ENCODE measurements at regions of chr1 and their contacts with region 1.

Region 1: DNA sequence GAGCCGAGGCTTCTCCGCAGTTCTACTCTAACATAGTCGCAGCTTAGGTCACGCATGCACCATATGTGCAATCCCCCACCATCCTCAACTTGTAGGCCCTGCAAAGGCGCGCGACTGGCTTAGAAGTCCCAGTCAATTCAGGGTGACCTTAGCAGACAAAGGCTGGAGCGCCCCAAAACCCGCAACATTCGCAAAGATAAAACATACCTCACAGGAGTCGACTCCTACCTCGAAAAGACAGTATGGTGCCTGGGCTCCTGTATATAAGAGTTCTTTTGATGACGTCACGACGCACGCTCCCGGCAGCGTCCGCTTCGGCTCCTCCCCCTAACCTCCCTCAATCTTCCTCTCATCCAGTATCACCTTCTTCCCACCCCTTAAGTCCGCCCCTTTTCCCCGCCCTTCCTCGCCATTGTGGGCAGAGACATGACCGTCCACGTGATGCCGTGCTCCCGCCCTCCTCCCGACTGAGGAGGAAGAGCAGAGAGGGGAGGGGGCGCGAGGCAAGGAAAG is at the start of gene GAS5:
- DNase-seq: peak; percentile 99
- ATAC-seq: peak; percentile 93 to 97
- H3K4me3 ChIP-seq: peak within 1 kb of the TSS; percentile 63 to 97 (median 85)
- H3K27ac ChIP-seq: peak within 1 kb of the TSS; percentile 90 to 96 (median 95)
- H3K4me1 ChIP-seq: peaks cover 27 to 30% of the 10 kb centered on the region in 2 donors
- H3K27me3 ChIP-seq: no peaks in the 10 kb centered on the region
- CTCF ChIP-seq: peak in 1 of 5 experiments; percentile 13
- POLR2A ChIP-seq: peak; percentile 93 to 97
- total RNA-seq, gene GAS5: 91.9 to 138 (median 98.4) TPM

Region 2: GRCh38 chr1:173420330-173420806 is 447.4 kb before region 1 on chr1:
- in situ Hi-C with region 1: no loop called
- intact Hi-C with region 1: loop called (anchors 5 kb)
- DNase-seq: peak in 1 of 2 donors; percentile 40
- ATAC-seq: peak; percentile 76 to 87
- H3K4me3 ChIP-seq: peak overlapping the region in 1 of 4 donors; percentile 8
- H3K27ac ChIP-seq: no peak overlapping the region
- H3K4me1 ChIP-seq: peaks cover 2 to 3% of the 10 kb centered on the region in 2 donors
- H3K27me3 ChIP-seq: no peaks in the 10 kb centered on the region
- CTCF ChIP-seq: peak; percentile 77 to 87 (median 82)
- POLR2A ChIP-seq: no peak

Region 3: DNA sequence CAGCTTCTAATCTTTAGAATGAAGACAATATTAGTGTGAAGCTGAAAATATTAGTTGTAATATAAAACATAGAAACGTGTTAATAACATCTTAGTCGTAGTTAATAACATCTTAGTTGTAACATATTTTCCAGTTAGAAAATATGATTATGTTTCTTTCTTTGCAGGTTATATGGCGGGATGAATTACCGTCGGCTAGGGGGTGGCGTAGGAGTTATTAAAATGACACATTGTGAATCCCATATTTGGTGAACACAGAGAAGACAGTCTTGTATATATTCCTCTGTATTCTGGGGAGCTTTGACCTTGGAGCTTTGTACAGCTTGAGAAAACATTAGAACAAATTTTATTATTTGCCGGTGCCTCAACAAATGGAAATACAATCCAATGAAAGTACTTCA is 82.8 kb before region 1 on chr1:
- in situ Hi-C with region 1: no loop called
- intact Hi-C with region 1: no loop called
- DNase-seq: no peak
- ATAC-seq: no peak
- H3K4me3 ChIP-seq: no peak overlapping the region
- H3K27ac ChIP-seq: no peak overlapping the region
- H3K4me1 ChIP-seq: no peaks in the 10 kb centered on the region
- H3K27me3 ChIP-seq: no peaks in the 10 kb centered on the region
- CTCF ChIP-seq: no peak
- POLR2A ChIP-seq: no peak

Region 4: GRCh38 chr1:174005032-174005431 is 137.2 kb after region 1 on chr1:
- in situ Hi-C with region 1: no loop called
- intact Hi-C with region 1: loop called (anchors 5 kb)
- DNase-seq: no peak
- ATAC-seq: peak; percentile 23 to 41
- H3K4me3 ChIP-seq: no peak overlapping the region
- H3K27ac ChIP-seq: peak overlapping the region in 3 of 4 donors; percentile 8 to 84 (median 38)
- H3K4me1 ChIP-seq: peaks cover 39 to 54% of the 10 kb centered on the region in 2 donors
- H3K27me3 ChIP-seq: no peaks in the 10 kb centered on the region
- CTCF ChIP-seq: no peak
- POLR2A ChIP-seq: no peak

Region 5: DNA sequence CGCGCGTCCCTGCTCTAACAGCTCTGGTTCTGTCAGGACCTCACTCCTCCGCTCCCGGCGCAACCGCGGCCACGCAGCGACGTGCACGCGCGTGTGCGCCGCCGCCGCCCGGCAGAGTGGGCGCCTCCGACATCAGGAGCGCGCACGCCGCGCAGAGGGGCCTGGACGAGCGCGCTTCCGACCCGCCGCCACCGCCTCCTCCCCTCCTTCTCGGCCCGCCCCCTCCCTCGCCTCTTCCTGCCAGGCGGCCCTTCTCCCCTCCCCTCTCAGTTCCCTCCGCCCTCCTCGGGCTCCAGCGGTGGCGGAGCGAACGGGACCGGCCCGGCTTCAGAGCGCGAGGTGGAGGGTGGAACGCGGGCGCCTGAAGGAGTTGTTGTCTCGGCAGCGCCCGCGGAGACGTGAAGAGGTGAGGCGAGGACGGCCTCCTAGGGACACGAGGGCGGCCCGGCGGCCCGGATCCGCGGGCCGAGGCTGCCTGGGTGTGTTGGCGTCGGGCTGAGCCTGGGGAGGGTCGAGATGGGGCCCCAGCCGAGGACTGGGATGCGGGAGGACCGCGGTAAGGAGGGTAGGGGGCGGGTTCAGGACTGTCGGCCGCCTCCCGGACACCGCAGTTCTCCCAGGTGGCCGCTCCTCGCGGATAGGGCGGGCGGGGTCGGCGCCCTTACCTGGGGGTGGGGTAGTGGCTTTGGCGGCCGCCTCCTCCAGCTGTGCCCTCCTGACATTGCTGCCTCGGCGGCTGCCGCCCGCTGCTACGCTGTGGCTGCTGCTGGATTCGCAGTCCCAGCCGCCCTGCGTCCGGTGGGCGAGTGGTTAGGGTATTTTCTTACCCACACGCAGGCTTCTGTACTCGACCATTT is 291.7 kb after region 1 on chr1 and contains the start of gene RABGAP1L:
- in situ Hi-C with region 1: no loop called
- intact Hi-C with region 1: loop called (anchors 1 kb)
- DNase-seq: peak; percentile 88 to 90
- ATAC-seq: peak; percentile 94
- H3K4me3 ChIP-seq: peak within 1 kb of the TSS; percentile 90 to 100 (median 93)
- H3K27ac ChIP-seq: peak within 1 kb of the TSS; percentile 92 to 98 (median 94)
- H3K4me1 ChIP-seq: peaks cover 3 to 11% of the 10 kb centered on the region in 2 donors
- H3K27me3 ChIP-seq: no peaks in the 10 kb centered on the region
- CTCF ChIP-seq: peak in 2 of 5 experiments; percentile 9 to 17
- POLR2A ChIP-seq: peak; percentile 73 to 79
- total RNA-seq, gene RABGAP1L: 8.8 to 22.2 (median 14.9) TPM

Region 6: GRCh38 chr1:174999216-174999925 is 1131.6 kb after region 1 on chr1:
- in situ Hi-C with region 1: loop called in 1 of 4 experiments (anchors 25 kb)
- intact Hi-C with region 1: no loop called
- DNase-seq: peak; percentile 96 to 98
- ATAC-seq: peak; percentile 93 to 98
- H3K4me3 ChIP-seq: peak overlapping the region; percentile 72 to 83 (median 74)
- H3K27ac ChIP-seq: peak overlapping the region; percentile 94 to 97 (median 96)
- H3K4me1 ChIP-seq: peaks cover 17 to 24% of the 10 kb centered on the region in 2 donors
- H3K27me3 ChIP-seq: no peaks in the 10 kb centered on the region
- CTCF ChIP-seq: no peak
- POLR2A ChIP-seq: peak; percentile 86 to 91